PC-3 (cell line): ENCODE measurements at regions of chr18 and their contacts with region 1.

Region 1: DNA sequence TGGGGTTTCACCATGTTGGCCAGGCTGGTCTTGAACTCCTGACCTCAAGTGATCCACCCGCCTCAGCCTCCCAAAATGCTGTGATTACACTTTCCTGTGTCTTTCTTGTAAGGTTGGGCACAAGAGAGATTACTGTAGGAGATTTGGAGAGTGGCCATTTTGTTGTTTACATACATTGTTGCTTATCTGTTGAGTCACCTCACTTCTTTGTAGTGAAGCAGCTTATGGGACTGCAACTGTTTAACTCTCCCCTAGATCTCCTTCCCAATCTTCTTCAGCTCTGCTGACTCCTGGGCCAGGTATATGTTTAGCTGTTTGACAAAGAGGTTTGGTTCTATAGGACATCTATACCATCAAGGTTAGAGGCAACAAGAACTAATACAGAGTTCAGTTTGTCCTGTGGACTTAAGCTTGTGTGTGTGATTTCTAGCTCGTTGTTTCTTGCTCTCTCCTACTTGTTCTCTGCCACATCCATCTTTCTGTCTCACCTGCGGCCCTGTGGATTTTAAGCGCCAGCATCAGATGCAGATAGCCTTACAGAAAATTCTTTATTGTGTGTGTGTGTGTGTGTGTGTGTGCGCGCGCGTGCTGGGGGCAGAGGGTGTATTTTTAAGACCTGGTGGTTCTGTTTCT is 95.4 kb downstream of the HAUS1 start:
- DNase-seq: peak; percentile 67
- ATAC-seq: peak; percentile 95
- H3K4me3 ChIP-seq: no peak overlapping the region
- H3K27ac ChIP-seq: no peak overlapping the region
- H3K4me1 ChIP-seq: peaks cover 6% of the 10 kb centered on the region
- H3K27me3 ChIP-seq: no peaks in the 10 kb centered on the region
- CTCF ChIP-seq: no peak

Region 2: DNA sequence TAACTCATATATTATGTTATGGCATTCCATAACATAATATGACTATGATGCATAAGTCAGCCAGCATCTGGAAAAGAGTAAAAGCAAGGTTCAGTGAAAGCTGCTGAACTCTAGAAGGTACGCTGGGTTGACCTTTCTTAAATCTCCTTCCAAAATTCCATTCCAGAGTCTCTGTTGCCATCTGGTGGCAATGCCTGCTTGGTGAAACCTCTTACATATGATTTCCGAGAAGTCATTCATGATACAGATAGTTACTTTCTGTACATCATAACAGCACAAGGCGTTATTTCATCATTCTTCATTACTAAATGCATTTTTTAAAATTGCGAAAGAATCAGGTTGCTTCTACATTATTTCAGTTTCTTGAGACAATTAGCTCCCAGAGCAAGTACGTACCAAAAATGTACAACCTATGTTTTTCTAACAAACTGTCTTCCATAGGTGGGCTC is 225.5 kb before region 1 on chr18:
- CTCF ChIA-PET with region 1: no interaction called
- POLR2A ChIA-PET with region 1: no interaction called
- intact Hi-C with region 1: no loop called
- DNase-seq: peak; percentile 72
- ATAC-seq: peak; percentile 65
- H3K4me3 ChIP-seq: no peak overlapping the region
- H3K27ac ChIP-seq: no peak overlapping the region
- H3K4me1 ChIP-seq: no peaks in the 10 kb centered on the region
- H3K27me3 ChIP-seq: no peaks in the 10 kb centered on the region
- CTCF ChIP-seq: peak; percentile 71

Region 3: DNA sequence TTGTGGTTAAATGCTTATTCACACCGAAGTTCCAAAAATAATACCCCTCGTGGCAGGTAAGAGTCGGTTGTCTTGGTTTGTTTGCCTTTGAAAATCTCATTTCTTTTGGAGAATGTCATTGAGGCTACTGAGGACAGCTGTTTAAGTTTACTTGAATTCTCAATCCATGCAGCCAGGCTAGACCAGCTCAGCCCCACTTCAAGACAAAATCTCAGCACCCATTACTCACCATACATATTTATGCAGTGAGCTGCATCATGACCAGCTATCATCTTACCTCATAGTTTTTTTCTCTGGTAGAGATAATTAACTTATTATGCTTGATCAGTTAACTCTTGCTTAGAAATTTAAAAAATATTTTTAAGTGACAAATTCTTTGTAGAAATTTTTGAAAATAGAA is 20.5 kb after region 1 on chr18:
- CTCF ChIA-PET with region 1: no interaction called
- POLR2A ChIA-PET with region 1: no interaction called
- intact Hi-C with region 1: no loop called
- DNase-seq: peak; percentile 16
- ATAC-seq: no peak
- H3K4me3 ChIP-seq: no peak overlapping the region
- H3K27ac ChIP-seq: no peak overlapping the region
- H3K4me1 ChIP-seq: no peaks in the 10 kb centered on the region
- H3K27me3 ChIP-seq: no peaks in the 10 kb centered on the region
- CTCF ChIP-seq: no peak

Region 4: DNA sequence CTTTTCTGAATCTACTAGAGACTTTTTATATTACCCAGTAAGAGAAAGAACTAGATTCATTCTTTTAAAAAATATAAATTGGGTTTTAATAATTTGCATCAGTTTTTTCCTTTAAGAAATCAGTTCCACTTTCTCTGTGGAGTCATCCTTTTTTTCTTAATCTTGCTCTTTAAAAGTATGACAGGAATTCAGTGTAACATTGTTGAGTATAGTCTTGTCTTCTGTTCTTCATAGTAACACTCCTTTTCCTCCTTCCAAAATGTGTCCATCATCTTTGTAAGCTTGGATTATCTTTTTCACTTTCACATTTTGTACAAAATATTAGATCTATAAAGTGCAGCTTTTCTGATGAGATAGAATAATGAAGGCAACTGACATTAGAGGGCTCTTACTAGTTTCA is 39.9 kb after region 1 on chr18:
- CTCF ChIA-PET with region 1: no interaction called
- POLR2A ChIA-PET with region 1: interaction called, 13 read pairs
- intact Hi-C with region 1: no loop called
- DNase-seq: no peak
- ATAC-seq: no peak
- H3K4me3 ChIP-seq: no peak overlapping the region
- H3K27ac ChIP-seq: no peak overlapping the region
- H3K4me1 ChIP-seq: no peaks in the 10 kb centered on the region
- H3K27me3 ChIP-seq: no peaks in the 10 kb centered on the region
- CTCF ChIP-seq: no peak